Activated CD4-positive, alpha-beta memory T cell treated with anti-CD3 and anti-CD28 coated beads, Interleukin-2, amount 10 ng/mL, durations not matched to agents 7 days and 5 days (primary cell): ENCODE measurements at regions of chr2 and their contacts with region 1.

Region 1: DNA sequence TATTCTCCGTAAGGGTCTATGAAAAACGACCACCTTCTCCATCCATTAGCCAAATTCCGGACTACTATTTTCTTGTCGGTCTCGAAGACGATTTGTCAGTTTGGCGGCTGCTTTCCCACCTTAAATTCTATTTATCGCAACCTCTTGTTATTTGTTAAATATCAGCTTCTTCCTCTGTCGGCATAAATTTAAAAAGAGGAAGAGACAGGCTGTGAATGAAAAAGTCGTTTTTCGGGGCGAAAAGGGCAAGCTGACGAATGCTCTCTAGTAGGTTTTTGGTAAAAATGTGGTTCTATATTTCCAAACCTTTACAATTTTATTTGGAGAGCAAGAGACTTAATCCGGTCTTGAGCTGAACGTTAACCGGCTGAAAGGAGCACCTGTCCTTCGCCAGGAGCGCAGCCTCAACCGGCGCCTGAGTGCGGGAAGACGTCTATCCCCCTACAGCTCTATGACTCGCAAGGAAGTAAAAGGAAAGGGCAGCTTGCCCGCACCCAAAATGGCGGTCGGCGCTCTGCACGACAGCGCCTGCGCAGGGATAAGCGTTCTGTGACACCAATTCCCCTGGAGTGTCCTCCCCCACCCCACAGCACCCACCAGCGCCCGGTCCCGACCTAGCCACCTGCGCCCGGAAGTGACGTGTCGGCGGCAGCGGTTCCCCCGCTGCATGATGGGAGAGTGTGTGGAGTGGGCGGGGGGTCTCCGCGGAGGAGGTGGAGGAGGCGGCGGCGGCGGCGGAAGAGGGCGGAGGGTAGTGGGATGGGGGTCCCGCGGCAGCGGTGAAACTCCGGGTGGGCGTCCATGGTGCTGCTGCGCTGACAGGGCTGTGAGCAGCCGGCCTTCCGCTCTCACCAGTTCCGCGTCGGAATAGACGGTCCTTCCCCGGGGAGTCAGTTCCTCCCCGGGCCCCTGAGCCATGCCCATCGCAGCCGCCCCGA is at the start of gene AFTPH:
- DNase-seq: peak; percentile 100
- H3K4me3 Mint-ChIP-seq: peak within 1 kb of the TSS; percentile 97
- H3K27ac Mint-ChIP-seq: peak within 1 kb of the TSS; percentile 98
- H3K4me1 Mint-ChIP-seq: peaks cover 40% of the 10 kb centered on the region
- H3K27me3 Mint-ChIP-seq: peaks cover 2% of the 10 kb centered on the region
- total RNA-seq, gene AFTPH: 39.2 to 40.2 TPM

Region 2: DNA sequence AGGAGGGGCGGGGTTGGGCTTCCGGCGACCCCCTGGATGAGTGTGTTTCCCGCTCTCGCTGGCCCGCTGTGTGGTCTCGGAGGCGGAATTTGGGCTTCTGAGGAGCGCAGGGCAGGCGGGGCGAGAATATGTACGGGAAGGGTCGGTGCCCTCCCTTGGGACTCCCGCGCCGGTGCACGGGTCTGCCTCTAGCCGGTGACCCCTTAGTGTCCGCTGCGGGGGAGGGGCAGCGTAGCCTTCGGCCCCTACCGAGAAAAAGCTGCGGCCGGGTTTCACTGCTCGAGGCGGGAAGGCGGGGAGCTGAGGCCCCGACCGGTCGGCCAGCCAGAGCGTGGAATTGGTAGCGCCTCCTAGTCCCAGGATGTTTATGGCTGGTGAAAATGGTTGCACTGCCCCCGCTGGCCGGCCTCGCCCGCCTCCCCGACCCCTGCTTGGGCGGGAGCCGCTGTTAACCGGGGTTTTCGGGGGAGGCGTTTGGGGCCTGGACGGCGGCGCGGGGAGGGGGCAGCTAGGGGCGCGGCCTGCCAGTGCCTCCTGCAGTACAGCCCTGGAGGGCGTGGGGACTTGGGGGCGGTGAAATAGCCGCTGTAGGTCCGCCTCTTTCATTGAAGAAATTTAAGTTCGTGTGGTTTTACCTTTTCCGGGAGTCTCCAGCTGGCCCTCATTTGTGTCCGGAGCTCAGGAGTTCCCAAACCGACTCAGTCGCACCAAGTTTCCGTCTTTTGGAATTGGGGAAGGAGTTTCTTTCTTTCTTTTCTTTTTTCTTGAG is 682.5 kb before region 1 on chr2 and contains the start of gene UGP2:
- CTCF ChIA-PET with region 1: interaction called, 4 read pairs
- POLR2A ChIA-PET with region 1: interaction called, 15 read pairs
- DNase-seq: peak; percentile 92
- H3K4me3 Mint-ChIP-seq: peak within 1 kb of the TSS; percentile 99
- H3K27ac Mint-ChIP-seq: peak within 1 kb of the TSS; percentile 95
- H3K4me1 Mint-ChIP-seq: peaks cover 51% of the 10 kb centered on the region
- H3K27me3 Mint-ChIP-seq: no peaks in the 10 kb centered on the region
- total RNA-seq, gene UGP2: 180 TPM

Region 3: DNA sequence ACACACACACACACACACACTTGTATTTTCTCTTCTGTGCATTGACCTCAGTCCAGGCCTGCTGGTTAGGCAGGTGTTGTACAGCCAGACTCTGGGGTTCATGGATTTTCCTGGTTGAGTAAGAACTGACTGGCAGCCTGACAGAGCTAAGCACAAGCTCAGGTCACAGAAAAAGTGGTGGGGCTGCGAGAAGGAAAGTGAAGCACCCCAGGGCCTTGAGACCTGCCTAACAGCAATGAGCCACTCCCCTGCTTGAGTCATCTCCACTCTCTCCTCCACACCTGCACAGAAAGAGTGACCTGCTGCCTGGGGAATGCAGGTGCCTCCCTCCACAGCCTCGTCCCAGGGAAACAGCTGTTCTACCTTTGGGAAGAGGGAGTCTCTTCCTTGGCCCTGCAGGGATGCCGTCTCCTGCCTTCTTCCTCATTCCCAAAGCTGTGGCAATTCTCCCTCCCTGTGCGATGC is 161.3 kb before region 1 on chr2:
- CTCF ChIA-PET with region 1: no interaction called
- POLR2A ChIA-PET with region 1: no interaction called
- DNase-seq: no peak
- H3K4me3 Mint-ChIP-seq: no peak overlapping the region
- H3K27ac Mint-ChIP-seq: no peak overlapping the region
- H3K4me1 Mint-ChIP-seq: peaks cover 10% of the 10 kb centered on the region
- H3K27me3 Mint-ChIP-seq: peaks cover 17% of the 10 kb centered on the region

Region 4: DNA sequence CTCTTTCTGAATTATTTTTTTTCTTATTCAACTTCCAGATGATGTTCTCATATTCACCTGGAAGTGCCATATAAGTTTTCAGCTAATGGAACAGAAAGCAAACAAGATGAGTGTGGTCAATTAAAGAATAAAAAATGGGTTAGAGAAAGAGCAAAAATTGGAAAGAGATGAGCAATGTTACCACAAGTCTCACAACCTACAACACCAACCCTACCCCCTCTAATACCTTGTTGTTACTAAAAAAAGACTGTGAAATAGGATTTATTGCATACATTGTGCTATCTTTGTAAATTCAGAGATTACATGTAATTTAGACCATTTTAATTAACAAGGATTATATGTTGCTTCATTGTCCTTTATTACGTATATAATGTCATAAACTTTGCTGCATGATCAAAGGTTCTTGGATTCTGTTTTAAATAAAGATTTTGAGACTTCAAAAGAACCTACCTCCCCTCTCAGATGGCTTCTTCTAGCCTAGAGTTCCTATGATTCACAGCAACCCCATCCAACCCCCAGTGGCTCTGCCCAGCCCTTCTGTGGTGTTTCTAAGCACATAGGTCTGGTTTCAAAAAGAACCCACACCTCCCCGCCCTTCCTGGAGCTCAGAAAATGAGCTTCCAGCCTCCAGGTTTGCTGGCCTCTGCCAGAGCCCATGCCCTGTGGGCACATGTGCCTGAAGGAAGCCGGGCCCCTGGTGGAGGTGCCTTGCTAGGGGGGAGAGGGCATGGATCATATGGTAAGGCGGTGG is 45.3 kb before region 1 on chr2:
- CTCF ChIA-PET with region 1: interaction called, 13 read pairs
- POLR2A ChIA-PET with region 1: interaction called, 4 read pairs
- DNase-seq: peak; percentile 66
- H3K4me3 Mint-ChIP-seq: no peak overlapping the region
- H3K27ac Mint-ChIP-seq: peak overlapping the region; percentile 56
- H3K4me1 Mint-ChIP-seq: peaks cover 34% of the 10 kb centered on the region
- H3K27me3 Mint-ChIP-seq: peaks cover 5% of the 10 kb centered on the region

Region 5: DNA sequence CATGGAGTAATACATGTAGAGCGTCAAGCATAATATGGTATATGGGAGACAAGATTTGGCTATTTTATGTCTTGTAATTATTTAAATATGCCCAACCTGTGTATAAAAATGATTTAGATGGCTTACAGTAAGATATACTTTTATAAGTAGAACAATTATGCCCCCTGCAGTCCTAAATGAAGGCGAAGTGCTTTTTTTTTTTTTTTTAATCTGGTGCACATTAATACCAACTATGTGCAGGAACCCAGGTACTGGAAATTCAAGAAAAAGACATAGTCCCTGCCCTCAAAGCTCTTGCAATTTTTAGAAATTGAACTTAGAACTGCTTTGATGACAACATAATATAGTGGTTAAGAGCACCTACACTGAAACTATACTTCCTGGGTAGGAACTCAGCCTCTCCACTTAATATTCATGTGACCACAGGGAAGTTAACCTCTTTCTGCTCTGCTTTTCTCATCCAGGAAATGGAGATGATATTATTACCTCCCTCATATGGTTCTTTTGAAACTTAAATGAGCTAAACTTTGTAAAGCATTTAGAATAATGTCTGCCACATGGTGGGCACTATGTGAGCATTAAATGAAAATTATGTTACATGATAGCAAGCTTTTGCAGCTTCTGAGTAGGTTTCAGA is 38.3 kb after region 1 on chr2:
- CTCF ChIA-PET with region 1: interaction called, 37 read pairs
- POLR2A ChIA-PET with region 1: interaction called, 51 read pairs
- DNase-seq: no peak
- H3K4me3 Mint-ChIP-seq: no peak overlapping the region
- H3K27ac Mint-ChIP-seq: peak overlapping the region; percentile 13
- H3K4me1 Mint-ChIP-seq: peaks cover 37% of the 10 kb centered on the region
- H3K27me3 Mint-ChIP-seq: no peaks in the 10 kb centered on the region

Region 6: GRCh38 chr2:64609227-64609941 is 85.4 kb after region 1 on chr2:
- CTCF ChIA-PET with region 1: interaction called, 33 read pairs
- POLR2A ChIA-PET with region 1: interaction called, 54 read pairs
- DNase-seq: peak; percentile 73
- H3K4me3 Mint-ChIP-seq: peak overlapping the region; percentile 66
- H3K27ac Mint-ChIP-seq: no peak overlapping the region
- H3K4me1 Mint-ChIP-seq: peaks cover 29% of the 10 kb centered on the region
- H3K27me3 Mint-ChIP-seq: peaks cover 12% of the 10 kb centered on the region

Region 7: DNA sequence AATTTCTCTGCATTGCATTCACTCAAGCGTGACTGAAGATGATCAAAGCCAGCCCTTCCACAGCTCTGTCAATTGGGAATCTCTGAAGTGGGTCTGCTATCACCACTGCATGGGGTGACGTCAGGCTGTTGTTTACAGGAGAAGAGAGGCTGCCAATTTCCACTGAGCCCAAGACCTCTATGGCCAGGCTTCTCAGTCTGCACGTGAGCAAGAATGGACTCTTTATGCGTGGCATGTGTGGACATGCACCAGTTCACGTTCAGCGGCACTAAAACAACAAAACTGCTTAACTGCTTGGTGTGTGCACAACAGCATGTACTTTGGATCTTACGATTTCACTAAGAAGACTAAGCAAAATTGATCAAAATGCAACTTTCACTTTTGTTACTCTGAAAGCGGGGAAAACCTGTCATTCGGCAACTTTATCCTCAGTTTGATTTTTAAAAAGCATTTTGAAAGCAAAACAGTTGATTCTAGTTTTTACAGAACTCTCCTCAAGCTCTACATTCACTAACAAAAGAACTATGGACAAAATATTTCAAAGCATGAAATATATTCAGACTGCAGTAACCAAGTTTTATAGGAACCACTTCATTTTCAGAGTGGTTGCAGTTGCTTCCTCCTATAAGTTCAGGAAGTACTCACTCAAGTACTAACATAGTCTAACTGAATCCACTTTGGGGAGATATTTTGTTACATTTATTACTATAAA is 206.8 kb after region 1 on chr2:
- CTCF ChIA-PET with region 1: interaction called, 3 read pairs
- POLR2A ChIA-PET with region 1: interaction called, 12 read pairs
- DNase-seq: peak; percentile 45
- H3K4me3 Mint-ChIP-seq: peak overlapping the region; percentile 74
- H3K27ac Mint-ChIP-seq: peak overlapping the region; percentile 84
- H3K4me1 Mint-ChIP-seq: peaks cover 52% of the 10 kb centered on the region
- H3K27me3 Mint-ChIP-seq: peaks cover 2% of the 10 kb centered on the region

Region 8: GRCh38 chr2:64742678-64743077 is 218.7 kb after region 1 on chr2:
- CTCF ChIA-PET with region 1: no interaction called
- POLR2A ChIA-PET with region 1: no interaction called
- DNase-seq: no peak
- H3K4me3 Mint-ChIP-seq: no peak overlapping the region
- H3K27ac Mint-ChIP-seq: no peak overlapping the region
- H3K4me1 Mint-ChIP-seq: peaks cover 11% of the 10 kb centered on the region
- H3K27me3 Mint-ChIP-seq: no peaks in the 10 kb centered on the region

Region 9: GRCh38 chr2:64865073-64865830 is 341.3 kb after region 1 on chr2:
- CTCF ChIA-PET with region 1: interaction called, 10 read pairs
- POLR2A ChIA-PET with region 1: interaction called, 13 read pairs
- DNase-seq: peak; percentile 69
- H3K4me3 Mint-ChIP-seq: peak overlapping the region; percentile 66
- H3K27ac Mint-ChIP-seq: no peak overlapping the region
- H3K4me1 Mint-ChIP-seq: peaks cover 1% of the 10 kb centered on the region
- H3K27me3 Mint-ChIP-seq: peaks cover 8% of the 10 kb centered on the region